Esophagus muscularis mucosa (tissue), 4 donors: ENCODE measurements at regions of chr3 and their contacts with region 1.

Region 1: GRCh38 chr3:42749753-42750231 is 23.3 kb downstream of the CCDC13 start:
- DNase-seq: no peak
- H3K4me3 ChIP-seq: no peak overlapping the region
- H3K27ac ChIP-seq: peak overlapping the region; percentile 23 to 81 (median 72)
- H3K4me1 ChIP-seq: peaks cover 31 to 67% (median 61%) of the 10 kb centered on the region in 4 donors
- H3K27me3 ChIP-seq: no peaks in the 10 kb centered on the region
- CTCF ChIP-seq: peak; percentile 24 to 44 (median 32)
- EP300 ChIP-seq: no peak
- POLR2A ChIP-seq: no peak

Region 2: DNA sequence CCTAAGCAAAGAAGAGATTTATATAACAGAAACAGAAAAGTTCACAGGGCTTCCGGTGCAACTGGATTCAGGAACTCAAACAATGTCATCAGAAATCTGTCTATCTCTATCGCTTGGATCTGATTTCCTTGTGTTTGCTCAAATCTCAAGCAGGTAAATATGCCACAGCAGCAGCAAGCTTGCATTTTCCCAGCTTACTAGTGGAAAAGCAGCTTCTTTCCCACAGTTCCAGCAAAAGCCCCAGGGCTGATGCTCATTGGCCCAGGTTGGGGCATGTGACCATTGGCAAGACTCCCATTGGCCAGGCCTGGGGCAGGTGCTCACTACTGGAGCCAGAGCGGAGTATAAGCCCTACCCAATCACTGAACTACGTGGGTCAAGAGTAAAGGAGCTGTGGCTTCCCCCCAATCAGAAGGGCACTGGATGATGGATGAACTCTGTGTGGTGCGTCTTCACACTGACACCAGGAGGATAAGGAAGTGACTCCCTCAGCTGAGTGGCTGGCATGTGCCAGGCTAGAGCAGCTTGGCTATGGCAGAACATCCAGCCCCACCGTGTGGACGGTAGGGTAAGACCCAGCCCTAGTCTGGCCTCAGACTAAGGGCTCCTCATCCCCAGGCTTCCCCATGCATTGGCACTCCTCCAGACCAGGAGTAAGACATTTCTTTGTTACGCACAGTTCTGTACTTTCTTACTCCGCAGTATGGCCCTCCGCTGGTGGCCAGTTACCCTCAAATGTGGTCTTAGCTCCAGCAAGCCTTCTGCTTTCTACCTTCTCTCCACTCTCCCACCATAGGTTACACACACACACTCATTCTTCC is 260.5 kb before region 1 on chr3:
- intact Hi-C with region 1: no loop called
- DNase-seq: peak; percentile 88
- H3K4me3 ChIP-seq: no peak overlapping the region
- H3K27ac ChIP-seq: peak overlapping the region in 1 of 4 donors; percentile 15
- H3K4me1 ChIP-seq: peaks cover 0 to 16% (median 7%) of the 10 kb centered on the region in 4 donors
- H3K27me3 ChIP-seq: no peaks in the 10 kb centered on the region
- CTCF ChIP-seq: no peak
- EP300 ChIP-seq: no peak
- POLR2A ChIP-seq: no peak

Region 3: GRCh38 chr3:42581709-42582473 is 167.9 kb before region 1 on chr3 and contains the start of gene SEC22C:
- intact Hi-C with region 1: loop called (anchors 5 kb)
- DNase-seq: peak; percentile 98
- H3K4me3 ChIP-seq: peak within 1 kb of the TSS; percentile 76 to 97 (median 82)
- H3K27ac ChIP-seq: peak within 1 kb of the TSS; percentile 87 to 93 (median 90)
- H3K4me1 ChIP-seq: peaks cover 15 to 37% (median 28%) of the 10 kb centered on the region in 4 donors
- H3K27me3 ChIP-seq: no peaks in the 10 kb centered on the region
- CTCF ChIP-seq: peak in 2 of 3 experiments; percentile 21 to 26
- EP300 ChIP-seq: no peak
- POLR2A ChIP-seq: peak; percentile 58
- total RNA-seq, gene SEC22C: 52.7 to 62.7 (median 57.9) TPM

Region 4: DNA sequence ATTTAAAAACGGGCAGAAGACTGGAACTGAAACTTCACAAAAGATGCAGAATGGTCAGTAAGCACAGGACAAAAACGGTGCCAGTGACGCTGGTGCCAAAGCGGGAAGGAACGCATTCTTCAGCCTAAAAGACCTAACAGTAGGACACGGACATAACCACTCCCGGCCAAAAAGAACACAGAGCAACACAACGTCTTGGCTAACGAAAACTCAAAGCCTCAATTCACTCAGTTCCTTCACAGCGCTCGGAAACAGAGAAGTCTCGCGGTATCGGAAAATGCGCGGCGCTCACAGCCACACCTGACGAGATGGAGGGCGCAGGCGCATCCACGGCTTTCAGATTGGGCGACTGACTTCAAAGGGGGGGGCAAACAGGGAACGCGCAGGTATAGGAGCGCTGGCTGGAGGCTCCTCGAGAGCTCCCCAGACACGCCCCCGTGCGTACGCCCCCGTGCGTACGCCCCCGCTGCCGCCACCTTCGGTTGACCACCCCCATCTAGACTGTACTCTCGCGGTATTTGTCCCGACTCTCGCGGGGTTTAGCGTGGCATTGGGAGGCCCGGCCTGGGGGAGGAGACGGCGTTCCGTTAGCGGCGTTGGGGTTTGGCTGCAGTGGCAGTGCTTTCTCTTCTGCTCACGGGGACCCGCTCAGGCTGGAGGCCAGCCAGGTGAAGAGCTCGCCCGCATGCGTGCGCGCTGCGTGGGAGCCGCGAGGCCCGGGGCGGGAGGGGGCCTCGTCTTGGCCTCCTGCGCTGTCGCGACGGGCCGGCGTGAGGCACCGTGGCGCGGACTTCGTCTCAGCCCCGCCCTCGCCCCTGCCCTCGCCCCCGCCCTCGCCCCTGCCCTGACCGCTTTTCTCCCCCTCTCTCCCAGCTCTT is 149.4 kb before region 1 on chr3 and contains the start of gene NKTR:
- intact Hi-C with region 1: loop called (anchors 5 kb)
- DNase-seq: peak; percentile 99
- H3K4me3 ChIP-seq: peak within 1 kb of the TSS; percentile 85 to 99 (median 90)
- H3K27ac ChIP-seq: peak within 1 kb of the TSS; percentile 96 to 99 (median 98)
- H3K4me1 ChIP-seq: peaks cover 16 to 36% (median 33%) of the 10 kb centered on the region in 4 donors
- H3K27me3 ChIP-seq: no peaks in the 10 kb centered on the region
- CTCF ChIP-seq: peak in 1 of 3 experiments; percentile 9
- EP300 ChIP-seq: no peak
- POLR2A ChIP-seq: peak; percentile 71
- total RNA-seq, gene NKTR: 24.7 to 73.1 (median 36.0) TPM